ENCODE measurements at regions of chr1 and their contacts with region 1.

Region 1: DNA sequence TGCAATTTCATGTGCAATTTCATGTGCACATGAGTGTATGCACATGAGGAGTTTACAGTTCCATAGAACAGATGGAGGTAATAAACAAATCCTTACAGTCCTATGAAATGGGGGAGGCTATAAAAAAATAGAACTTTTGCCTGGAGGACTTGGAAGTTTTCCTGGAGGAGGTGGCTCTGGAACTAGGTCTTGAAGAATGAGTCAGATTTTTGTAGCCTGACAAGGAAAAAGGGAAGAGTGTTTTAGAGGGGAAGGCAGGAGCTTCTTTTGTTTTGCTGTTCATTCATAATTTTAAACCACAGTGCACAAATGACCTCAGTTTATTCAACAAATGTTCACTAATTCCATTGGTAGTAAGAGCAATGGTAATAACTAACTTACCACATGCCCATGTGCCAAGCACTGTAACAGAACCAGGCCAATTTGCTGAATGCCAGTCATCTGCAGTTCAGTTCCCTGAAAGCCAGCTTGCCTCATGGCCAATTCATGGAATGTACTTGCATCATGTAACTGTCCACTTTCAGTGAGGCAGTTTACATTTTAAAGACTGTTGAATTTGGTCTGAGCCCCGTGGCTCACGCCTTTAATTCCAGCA is 2.7 kb downstream of the DIO1 start:
- DNase-seq: no peak
- ATAC-seq: no peak
- H3K4me3 Mint-ChIP-seq: no peak overlapping the region
- H3K27ac Mint-ChIP-seq: no peak overlapping the region
- H3K4me1 Mint-ChIP-seq: peaks cover 9% of the 10 kb centered on the region
- H3K27me3 Mint-ChIP-seq: peaks cover 4% of the 10 kb centered on the region
- CTCF ChIP-seq: no peak

Region 2: DNA sequence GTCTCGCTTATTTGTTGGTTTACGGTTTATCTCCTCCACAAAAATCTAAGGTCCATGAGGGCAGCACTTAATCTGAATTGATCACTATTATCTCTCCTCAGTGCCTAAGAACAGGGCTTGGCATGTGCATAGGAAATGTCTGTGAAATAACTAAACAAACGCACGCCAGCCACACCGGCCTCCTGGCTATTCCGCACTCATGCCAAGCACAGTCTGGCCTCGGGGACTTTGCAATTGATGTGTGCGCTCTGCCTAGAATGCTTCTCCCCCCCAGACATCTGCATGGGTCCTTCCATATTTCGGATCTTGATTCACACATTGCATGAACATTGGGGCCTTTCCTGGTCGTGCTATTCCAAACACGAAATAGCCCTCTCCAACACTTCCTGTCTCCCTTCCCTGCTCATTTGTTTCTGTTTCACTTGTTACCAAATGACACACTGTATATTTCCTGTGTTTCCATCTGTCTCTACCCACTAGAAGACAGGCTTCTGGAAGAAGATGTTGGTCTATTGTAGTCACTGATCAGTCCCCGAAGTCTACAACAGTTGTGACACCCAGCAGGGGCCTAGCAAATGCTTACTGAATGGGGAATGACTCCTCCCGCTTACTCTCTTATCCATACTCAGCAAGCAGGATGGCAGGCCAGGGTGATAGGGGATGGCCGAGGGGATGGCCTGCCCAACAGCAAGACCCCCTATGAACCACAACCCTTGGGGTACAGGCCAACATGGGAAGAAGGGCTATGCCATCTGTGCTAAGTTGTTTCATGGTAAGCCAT is 251.6 kb before region 1 on chr1:
- CTCF ChIA-PET with region 1: no interaction called
- POLR2A ChIA-PET with region 1: no interaction called
- intact Hi-C with region 1: no loop called
- DNase-seq: no peak
- ATAC-seq: no peak
- H3K4me3 Mint-ChIP-seq: no peak overlapping the region
- H3K27ac Mint-ChIP-seq: no peak overlapping the region
- H3K4me1 Mint-ChIP-seq: no peaks in the 10 kb centered on the region
- H3K27me3 Mint-ChIP-seq: peaks cover 7% of the 10 kb centered on the region
- CTCF ChIP-seq: no peak

Region 3: DNA sequence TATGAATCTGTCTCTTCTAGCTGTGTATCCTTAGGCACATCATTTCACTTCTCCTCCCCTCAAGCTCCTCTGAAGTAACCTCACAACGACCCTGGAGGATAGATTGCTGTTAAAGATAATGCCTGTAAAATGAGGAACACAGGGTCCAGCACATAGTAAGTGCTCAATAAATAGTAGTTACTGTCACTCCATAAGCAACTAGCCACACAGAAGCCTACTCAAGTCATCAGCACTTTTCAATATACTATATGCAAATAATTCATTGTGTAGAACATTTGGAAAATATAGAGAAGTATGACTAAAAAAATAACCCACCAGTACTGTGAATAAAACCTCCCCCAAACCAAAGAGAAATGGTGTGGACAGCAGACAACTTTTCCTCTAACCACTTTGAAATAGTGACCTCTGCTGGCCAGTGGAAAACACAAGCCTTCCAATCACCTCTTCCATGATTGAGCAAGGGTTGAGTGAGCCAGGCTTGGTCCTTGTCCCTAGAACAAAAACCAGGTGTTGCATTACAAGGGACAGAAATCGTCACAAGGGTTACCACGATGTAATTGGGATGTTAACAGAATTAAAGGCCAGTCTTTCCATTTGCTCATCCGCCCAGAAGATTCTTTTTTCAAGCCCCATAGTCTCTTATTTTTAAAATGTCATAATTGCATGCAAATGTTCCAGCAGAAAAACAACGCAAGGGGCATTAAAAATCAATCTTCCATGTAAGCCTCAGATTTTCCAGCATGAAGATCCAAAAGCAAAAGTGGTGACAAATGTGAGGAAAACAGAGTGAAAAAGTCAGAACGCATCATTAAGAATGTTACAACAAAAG is 142.0 kb before region 1 on chr1:
- CTCF ChIA-PET with region 1: no interaction called
- POLR2A ChIA-PET with region 1: no interaction called
- intact Hi-C with region 1: no loop called
- DNase-seq: no peak
- ATAC-seq: no peak
- H3K4me3 Mint-ChIP-seq: no peak overlapping the region
- H3K27ac Mint-ChIP-seq: no peak overlapping the region
- H3K4me1 Mint-ChIP-seq: no peaks in the 10 kb centered on the region
- H3K27me3 Mint-ChIP-seq: no peaks in the 10 kb centered on the region
- CTCF ChIP-seq: no peak

Region 4: DNA sequence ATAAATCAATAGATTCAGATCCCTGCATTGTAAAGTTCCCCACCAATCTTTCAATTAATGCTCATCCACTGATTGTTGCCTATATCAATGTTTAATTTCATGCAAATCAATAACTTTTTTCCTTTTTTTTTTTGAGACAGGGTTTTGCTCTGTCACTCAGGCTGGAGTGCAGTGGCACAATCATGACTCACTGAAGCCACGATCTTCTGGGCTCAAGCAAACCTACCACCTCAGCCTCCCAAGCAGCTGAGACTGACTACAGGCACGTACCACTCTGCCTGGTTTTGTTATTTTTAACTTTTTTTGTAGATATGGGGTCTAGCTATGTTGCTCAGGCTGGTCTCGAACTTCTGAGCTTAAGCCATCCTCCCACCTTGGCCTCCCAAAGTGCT is 22.9 kb after region 1 on chr1:
- CTCF ChIA-PET with region 1: no interaction called
- POLR2A ChIA-PET with region 1: interaction called, 11 read pairs
- intact Hi-C with region 1: no loop called
- DNase-seq: no peak
- ATAC-seq: no peak
- H3K4me3 Mint-ChIP-seq: no peak overlapping the region
- H3K27ac Mint-ChIP-seq: no peak overlapping the region
- H3K4me1 Mint-ChIP-seq: no peaks in the 10 kb centered on the region
- H3K27me3 Mint-ChIP-seq: no peaks in the 10 kb centered on the region
- CTCF ChIP-seq: no peak

Measured in activated B cell treated with CpG ODN at 0.5 μM for 24 hours (primary cell).